BJ (cell line): ENCODE measurements at regions of chr6 and their contacts with region 1.

Region 1: DNA sequence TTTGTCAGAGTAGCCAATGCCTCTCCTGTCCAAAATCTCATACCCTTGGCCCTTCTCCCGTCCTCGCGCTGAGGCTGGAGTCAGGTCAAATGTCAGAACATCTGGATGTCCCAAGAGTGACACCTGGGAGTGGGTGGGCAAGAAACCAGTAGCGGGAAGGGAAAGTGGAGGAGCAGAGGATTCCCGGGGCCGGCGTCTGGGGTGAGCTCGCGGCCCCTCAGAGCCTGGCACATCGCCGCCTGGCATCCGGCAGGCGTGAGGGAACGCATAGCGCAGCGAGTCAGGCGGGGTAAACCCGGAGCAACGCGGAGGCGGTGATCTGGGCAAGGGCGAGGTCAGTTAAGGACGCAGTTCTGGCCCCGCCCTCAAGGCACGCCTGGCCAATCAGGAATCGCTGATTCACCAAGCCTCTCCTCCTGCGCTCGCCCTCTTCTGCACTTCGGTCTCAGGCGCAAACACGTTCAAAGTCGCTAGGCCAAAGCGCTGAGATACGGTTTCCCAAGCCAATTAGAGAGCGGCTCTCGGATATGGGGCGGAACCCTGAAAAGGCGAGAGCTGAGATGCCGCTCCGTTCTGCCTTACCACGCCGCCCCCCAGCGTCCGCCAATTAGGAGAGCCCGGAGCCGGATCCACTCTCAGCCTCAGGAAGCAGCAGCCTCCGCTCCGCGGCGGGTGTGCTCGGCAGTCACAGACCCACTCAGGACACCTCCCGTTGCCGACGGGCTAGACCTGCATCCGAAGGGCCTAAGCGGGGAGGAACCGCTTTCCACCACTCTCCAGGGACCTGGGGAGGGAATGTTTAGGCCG is 22.5 kb downstream of the VPS52 start:
- DNase-seq: peak; percentile 98
- H3K4me3 ChIP-seq: peak overlapping the region; percentile 56
- H3K27me3 ChIP-seq: no peaks in the 10 kb centered on the region
- CTCF ChIP-seq: peak; percentile 25; the same call in 1 of the 2 replicates

Region 2: DNA sequence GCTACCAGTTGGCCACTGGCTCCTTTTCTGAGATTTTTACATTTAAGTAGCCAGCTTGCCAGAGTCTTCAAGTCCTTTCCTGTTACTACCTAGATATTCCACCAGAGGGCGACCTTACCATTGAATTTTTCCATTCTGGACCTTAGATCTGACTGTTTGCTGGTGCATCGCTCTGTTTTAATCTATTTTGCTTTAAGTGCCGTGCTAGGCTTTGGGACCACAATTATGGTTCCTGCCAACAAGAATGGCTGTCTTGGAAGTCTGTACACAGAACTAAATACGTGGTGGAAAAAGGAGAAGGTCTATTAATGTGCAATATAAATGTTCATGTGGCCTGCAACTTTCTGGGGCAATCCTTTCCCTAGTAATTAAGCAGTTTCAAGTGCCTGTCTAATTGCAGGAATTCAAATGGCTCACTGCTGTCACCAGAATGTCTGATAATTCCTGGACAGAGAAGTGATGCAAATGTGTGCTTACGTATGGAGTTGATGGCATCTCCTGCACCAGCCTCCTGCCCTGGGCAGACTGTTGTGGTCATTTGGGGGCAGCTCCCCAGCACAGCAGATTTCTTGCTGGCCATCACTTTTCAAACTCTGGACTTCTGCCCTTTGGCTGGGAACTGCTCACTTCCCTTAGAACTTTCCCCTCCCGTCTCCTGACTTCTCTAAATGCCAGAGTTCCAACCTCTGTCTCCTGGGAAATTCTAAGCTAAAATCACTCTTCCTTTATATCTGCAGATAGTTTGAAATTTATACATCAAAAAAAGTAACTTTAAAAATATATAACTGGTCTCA is 234.1 kb before region 1 on chr6:
- CTCF ChIA-PET with region 1: interaction called, 29 read pairs
- POLR2A ChIA-PET with region 1: no interaction called
- DNase-seq: peak; percentile 43
- H3K4me3 ChIP-seq: no peak overlapping the region
- H3K27me3 ChIP-seq: peaks cover 26% of the 10 kb centered on the region
- CTCF ChIP-seq: peak; percentile 72

Region 3: GRCh38 chr6:33126101-33126714 is 122.9 kb before region 1 on chr6:
- CTCF ChIA-PET with region 1: interaction called, 33 read pairs
- POLR2A ChIA-PET with region 1: no interaction called
- DNase-seq: no peak
- H3K4me3 ChIP-seq: no peak overlapping the region
- H3K27me3 ChIP-seq: peaks cover 8% of the 10 kb centered on the region
- CTCF ChIP-seq: peak; percentile 66

Region 4: GRCh38 chr6:33161354-33162331 is 87.5 kb before region 1 on chr6:
- CTCF ChIA-PET with region 1: interaction called, 32 read pairs
- POLR2A ChIA-PET with region 1: no interaction called
- DNase-seq: no peak
- H3K4me3 ChIP-seq: peak overlapping the region; percentile 39
- H3K27me3 ChIP-seq: peaks cover 3% of the 10 kb centered on the region
- CTCF ChIP-seq: peak; percentile 98

Region 5: DNA sequence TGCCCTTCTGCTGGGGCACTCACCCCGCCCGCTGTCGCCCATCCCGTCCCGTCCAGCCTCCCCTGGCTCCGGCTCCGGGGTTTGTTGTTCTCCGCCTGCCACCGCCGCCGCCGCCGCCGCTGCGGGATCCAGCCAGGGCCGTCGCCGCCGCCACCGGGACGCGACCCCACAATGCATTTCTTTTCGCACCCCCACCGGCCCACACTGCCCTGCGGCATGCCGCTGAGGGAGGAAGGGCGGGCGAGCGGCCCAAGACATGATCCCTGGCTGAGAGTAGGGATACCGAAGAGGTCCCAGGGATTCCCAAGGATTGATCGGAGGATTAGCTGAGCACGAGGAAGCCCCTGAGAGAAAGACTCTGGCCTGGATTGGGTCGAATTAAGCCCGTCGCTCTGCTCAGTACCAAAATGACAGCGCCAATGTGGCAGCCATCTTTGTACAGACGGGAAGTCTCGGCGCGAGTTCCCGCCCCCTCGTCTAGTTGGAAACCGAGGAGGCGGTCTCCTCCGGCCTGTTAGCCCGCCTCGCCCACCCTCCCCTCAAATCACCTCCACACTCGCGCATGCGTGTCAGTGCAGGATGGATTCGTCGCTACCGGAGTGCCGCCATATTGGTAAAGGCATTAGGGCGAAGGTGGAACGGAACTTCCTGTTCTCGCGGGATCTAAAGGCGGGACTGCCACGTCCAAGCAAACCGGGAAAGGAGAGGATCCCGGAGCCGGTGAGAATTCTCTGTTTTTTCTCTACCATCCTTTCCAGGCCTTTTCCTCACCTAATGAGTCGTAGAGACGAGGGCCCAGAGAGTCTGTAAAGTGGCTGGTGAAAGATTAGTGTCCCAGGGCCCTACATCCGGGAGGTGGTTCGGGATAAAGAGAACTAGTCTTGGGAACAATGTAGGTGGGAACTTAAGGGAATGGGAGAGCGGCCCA is 48.6 kb before region 1 on chr6 and contains the starts of genes RXRB and SLC39A7:
- CTCF ChIA-PET with region 1: interaction called, 21 read pairs
- POLR2A ChIA-PET with region 1: interaction called, 3 read pairs
- DNase-seq: peak; percentile 96
- H3K4me3 ChIP-seq: peak within 1 kb of the TSS; percentile 78
- H3K27me3 ChIP-seq: no peaks in the 10 kb centered on the region
- CTCF ChIP-seq: no peak
- polyA plus RNA-seq, gene RXRB: 51.3 and 67.9 TPM in 2 replicates
- polyA plus RNA-seq, gene SLC39A7: 116 and 151 TPM in 2 replicates

Region 6: GRCh38 chr6:33235221-33235634 is 13.9 kb before region 1 on chr6:
- CTCF ChIA-PET with region 1: interaction called, 34 read pairs
- POLR2A ChIA-PET with region 1: no interaction called
- DNase-seq: no peak
- H3K4me3 ChIP-seq: no peak overlapping the region
- H3K27me3 ChIP-seq: peaks cover 22% of the 10 kb centered on the region
- CTCF ChIP-seq: no peak